Left lung (tissue), 14 donors: ENCODE measurements at regions of chr2 and their contacts with region 1.

Region 1: DNA sequence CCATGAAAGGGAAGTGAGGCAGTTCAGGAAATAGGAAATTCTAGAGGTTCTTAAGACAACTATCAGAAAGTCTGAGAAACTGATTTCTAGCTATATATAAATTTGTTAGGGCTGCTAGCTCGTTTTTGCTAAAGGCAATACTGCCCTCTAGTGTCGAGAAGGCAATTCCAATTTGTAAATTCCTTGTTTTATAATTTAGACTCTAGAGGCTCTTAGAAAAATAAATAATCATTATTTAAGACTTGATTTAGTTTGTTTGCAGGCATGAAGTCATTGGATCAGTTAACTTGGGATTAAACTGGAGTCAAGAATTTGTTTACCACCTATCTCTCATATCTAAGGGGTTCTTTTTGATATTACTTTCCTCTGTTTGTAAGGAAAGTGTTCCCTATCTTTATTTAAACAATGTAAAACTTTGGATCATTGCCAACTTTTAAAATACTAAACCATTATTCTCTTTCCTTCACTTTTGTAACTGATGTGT is 66.2 kb downstream of the ACVR2A start:
- DNase-seq: peak in 2 of 4 donors; percentile 69 to 80
- ATAC-seq: peak; percentile 75
- H3K4me3 ChIP-seq: no peak overlapping the region
- H3K27ac ChIP-seq: no peak overlapping the region
- H3K4me1 ChIP-seq: peaks cover 3 to 26% of the 10 kb centered on the region in 2 donors
- H3K27me3 ChIP-seq: no peaks in the 10 kb centered on the region
- CTCF ChIP-seq: peak; percentile 66 to 77

Region 2: DNA sequence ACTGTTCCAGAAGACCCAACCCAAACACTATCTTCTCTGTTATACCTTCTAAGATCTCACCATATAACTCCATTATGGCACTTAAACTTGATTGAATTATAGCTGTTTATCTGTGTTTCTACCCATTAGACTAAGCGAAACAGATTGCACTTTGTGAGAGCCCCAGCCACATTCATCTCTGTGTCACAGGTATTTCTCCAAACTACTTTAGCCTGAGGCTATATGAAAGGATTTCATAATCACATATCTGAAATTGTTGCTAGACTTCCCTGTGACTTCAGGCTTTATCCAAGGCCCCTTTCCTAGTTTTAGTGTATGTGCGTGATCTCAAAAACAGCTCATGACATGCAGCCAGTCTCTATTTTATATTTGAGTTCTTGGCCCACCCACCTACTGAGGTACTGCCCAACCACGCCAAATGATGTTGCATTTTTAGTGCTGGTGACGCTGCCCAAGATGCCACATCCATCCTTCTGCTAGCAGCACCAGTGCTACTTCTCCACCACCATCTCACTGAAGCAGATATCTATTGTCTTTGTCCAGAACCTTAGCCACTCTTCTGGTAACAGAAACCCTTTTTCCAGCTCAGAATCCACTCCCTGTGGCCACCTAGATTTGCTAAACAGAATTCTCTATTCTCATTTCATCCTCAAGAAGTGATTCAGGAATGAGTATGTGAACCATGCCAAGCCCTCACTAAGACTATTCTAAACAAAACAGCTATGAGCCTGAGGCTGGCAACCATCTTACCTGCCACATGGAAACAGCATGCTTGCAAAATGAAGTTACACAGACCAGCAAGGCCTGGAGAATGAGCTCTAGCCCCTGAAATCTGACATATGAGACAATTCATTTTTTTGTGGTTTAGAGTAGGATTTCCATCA is 811.0 kb before region 1 on chr2:
- intact Hi-C with region 1: loop called in 1 of 2 experiments (anchors 10 kb)
- DNase-seq: no peak
- ATAC-seq: no peak
- H3K4me3 ChIP-seq: no peak overlapping the region
- H3K27ac ChIP-seq: no peak overlapping the region
- H3K4me1 ChIP-seq: no peaks in the 10 kb centered on the region
- H3K27me3 ChIP-seq: no peaks in the 10 kb centered on the region
- CTCF ChIP-seq: no peak